Caco-2 (cell line): ENCODE measurements at regions of chr17 and their contacts with region 1.

Region 1: DNA sequence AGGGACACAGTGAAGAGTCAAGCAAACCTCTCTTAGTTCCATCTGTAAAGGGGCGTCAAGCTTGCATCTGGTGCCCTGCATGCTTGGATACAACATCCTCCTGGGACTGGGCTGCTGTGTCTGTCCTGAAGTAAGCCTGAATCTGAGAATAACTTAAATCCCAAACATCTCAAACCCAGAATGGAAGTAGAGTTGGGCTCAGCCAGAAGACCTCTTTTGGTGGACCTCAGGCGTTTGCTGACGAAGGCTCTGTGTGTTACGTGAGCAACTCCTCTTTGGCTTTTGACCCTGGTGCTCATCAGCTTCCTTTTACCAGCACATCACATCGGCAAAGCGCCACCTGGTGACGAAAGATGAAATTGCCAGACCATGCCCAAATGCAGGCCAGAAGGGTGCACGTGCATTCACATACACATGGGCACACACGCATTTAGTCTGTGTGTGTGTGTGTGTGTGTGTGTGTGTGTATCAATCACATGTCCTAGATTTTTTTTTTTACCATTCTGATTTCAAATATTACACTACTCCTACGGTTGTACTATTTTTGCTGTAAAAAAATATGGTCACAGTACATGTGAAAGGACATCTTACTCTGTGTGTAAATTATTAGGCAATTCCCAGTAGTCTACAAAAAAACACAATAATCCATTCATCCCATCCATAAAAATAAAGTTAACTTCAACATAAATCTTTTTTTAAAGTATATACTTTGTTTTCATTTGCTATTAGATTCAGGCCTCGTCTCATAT is 41.1 kb upstream of the FOXJ1 start:
- DNase-seq: peak; percentile 89 to 93
- H3K4me3 ChIP-seq: no peak overlapping the region
- H3K4me3 Mint-ChIP-seq: no peak overlapping the region
- H3K27ac Mint-ChIP-seq: no peak overlapping the region
- H3K4me1 ChIP-seq: peaks cover 7% of the 10 kb centered on the region
- H3K4me1 Mint-ChIP-seq: peaks cover 6% of the 10 kb centered on the region
- H3K27me3 ChIP-seq: no peaks in the 10 kb centered on the region
- H3K27me3 Mint-ChIP-seq: no peaks in the 10 kb centered on the region
- CTCF ChIP-seq: peak; percentile 88 to 90

Region 2: DNA sequence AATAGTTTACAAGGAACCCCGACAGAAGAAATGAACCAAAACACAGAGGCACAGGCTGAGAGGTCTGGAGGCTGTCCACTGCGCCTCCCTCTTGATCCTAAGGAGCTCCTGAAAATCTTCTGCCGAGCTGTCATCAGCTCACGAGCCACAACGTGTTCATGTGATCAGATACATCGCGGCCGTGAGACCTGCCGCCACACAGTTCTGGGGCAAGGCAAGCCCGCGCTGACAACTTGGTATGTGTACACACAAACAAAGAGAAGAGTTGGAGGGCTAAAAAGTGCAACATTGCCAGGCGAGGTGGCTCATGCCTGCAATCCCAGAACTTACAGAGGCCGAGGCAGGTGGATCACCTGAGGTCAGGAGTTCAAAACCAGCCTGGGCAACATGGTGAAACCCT is 86.2 kb before region 1 on chr17:
- CTCF ChIA-PET with region 1: no interaction called
- POLR2A ChIA-PET with region 1: no interaction called
- intact Hi-C with region 1: no loop called
- DNase-seq: no peak
- H3K4me3 ChIP-seq: no peak overlapping the region
- H3K4me3 Mint-ChIP-seq: no peak overlapping the region
- H3K27ac Mint-ChIP-seq: no peak overlapping the region
- H3K4me1 ChIP-seq: no peaks in the 10 kb centered on the region
- H3K4me1 Mint-ChIP-seq: no peaks in the 10 kb centered on the region
- H3K27me3 ChIP-seq: no peaks in the 10 kb centered on the region
- H3K27me3 Mint-ChIP-seq: no peaks in the 10 kb centered on the region
- CTCF ChIP-seq: no peak

Region 3: DNA sequence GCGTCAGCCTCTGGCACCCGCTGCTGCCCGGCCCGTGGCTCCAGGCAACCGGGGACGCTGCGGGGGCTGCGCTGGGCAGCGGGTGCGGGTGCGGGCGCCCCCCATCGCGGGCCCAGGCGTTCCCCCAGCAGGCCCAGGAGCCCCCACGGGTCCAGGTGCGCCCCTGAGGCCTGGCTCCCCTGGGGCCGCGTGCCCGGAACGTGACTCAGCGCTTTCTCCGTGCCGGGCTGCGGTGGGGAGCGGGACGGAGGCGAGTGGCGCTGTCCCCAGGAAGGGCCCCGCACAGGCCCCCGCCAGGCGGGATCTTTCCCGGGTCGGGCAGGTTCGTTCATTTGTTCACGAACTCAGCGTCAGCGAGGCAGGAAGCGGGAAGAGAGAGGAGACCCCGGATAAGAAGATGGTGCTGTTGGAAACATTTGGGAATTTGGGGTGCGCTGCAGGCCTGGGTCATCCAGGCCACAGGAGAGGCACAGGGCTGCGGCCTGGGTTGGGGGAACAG is 60.2 kb before region 1 on chr17:
- CTCF ChIA-PET with region 1: interaction called, 16 read pairs
- POLR2A ChIA-PET with region 1: no interaction called
- intact Hi-C with region 1: no loop called
- DNase-seq: no peak
- H3K4me3 ChIP-seq: no peak overlapping the region
- H3K4me3 Mint-ChIP-seq: no peak overlapping the region
- H3K27ac Mint-ChIP-seq: peak overlapping the region; percentile 14
- H3K4me1 ChIP-seq: peaks cover 7% of the 10 kb centered on the region
- H3K4me1 Mint-ChIP-seq: peaks cover 33% of the 10 kb centered on the region
- H3K27me3 ChIP-seq: no peaks in the 10 kb centered on the region
- H3K27me3 Mint-ChIP-seq: no peaks in the 10 kb centered on the region
- CTCF ChIP-seq: no peak